Heart left ventricle (tissue), 16 donors: ENCODE measurements at regions of chr5 and their contacts with region 1.

Region 1: GRCh38 chr5:34756781-34757624 is 82.0 kb upstream of the TTC23L start:
- DNase-seq: no peak
- ATAC-seq: peak in 1 of 4 donors; percentile 22
- H3K4me3 ChIP-seq: no peak overlapping the region
- H3K27ac ChIP-seq: no peak overlapping the region
- H3K4me1 ChIP-seq: peaks cover 0 to 7% (median 0%) of the 10 kb centered on the region in 12 donors
- H3K27me3 ChIP-seq: no peaks in the 10 kb centered on the region
- CTCF ChIP-seq: no peak
- POLR2A ChIP-seq: no peak

Region 2: DNA sequence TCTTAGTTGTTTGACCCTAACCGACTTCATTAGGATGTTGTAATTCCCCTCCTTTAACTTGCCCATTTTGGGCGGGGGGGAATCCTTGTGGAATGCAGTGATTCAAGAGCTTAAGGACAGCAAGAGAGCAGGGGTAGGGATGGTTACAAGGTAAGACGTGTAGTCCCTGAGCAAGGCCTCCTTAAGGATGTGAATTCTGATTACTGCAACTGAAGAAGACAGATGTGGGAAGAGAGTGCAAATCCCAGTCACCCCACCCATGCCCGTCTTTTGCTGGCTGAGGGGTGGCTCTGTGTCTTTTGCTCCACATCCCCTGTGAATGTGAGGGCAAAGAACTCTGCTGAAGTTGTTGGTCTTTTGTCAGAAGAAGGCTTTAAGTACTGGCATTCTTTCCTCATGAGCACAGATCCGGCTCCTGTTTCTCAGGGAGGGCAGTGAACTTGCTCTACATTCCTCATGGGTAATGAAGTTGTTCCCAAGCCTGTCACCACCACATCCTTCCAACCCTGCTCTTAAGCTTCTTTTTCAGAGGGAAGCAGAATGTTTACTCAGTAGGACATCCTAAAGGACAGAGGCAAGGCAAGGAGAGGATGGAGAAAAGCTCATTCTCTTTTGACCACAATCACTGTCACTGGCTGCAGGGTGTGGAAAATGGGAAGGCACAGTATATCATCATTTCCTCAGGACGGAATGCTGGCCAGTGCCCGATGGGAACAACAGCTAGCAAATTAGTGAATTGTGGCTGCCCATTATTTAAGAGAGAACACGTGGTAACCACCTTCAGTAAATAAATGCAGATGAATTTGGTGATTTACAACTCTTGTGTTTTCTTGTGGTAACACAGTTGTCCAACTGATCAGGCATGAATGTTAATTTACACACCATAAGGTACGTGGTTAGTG is 39.3 kb before region 1 on chr5:
- intact Hi-C with region 1: loop called in 1 of 10 experiments (anchors 1 kb)
- DNase-seq: no peak
- ATAC-seq: peak in 3 of 4 donors; percentile 45 to 65 (median 54)
- H3K4me3 ChIP-seq: no peak overlapping the region
- H3K27ac ChIP-seq: peak overlapping the region in 5 of 12 donors; percentile 10 to 47 (median 36)
- H3K4me1 ChIP-seq: peaks cover 0 to 20% (median 7%) of the 10 kb centered on the region in 12 donors
- H3K27me3 ChIP-seq: no peaks in the 10 kb centered on the region
- CTCF ChIP-seq: no peak
- POLR2A ChIP-seq: no peak

Region 3: DNA sequence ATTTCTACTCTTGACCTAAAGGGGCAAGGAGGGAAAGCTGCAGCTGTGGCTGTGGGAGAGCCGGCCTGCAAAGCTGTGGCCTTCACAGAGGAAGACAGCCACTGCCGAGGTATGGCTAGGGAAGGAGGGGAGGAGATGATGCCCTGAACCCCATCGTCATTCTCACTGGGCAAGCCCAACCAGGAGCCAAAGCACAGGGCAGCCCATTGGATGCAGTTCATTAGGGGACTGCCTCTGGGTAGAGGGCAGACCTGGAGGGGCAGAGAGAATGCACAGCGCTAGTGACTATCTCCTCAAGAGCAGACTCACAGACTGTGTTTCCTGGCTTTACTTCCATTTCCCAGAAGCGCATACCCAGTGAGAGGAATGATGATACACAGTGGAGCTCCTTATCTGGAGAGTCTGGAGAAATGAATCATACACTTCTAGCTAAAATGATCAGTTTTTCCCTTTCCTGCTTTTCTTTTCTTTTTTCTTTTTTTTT is 34.8 kb after region 1 on chr5:
- intact Hi-C with region 1: loop called in 1 of 10 experiments (anchors 5 kb)
- DNase-seq: peak in 1 of 5 donors; percentile 10
- ATAC-seq: peak in 3 of 4 donors; percentile 61 to 89 (median 68)
- H3K4me3 ChIP-seq: no peak overlapping the region
- H3K27ac ChIP-seq: peak overlapping the region in 1 of 12 donors; percentile 3
- H3K4me1 ChIP-seq: peaks cover 0 to 16% (median 0%) of the 10 kb centered on the region in 12 donors
- H3K27me3 ChIP-seq: no peaks in the 10 kb centered on the region
- CTCF ChIP-seq: no peak
- POLR2A ChIP-seq: no peak